ENCODE measurements at regions of chr16 and their contacts with region 1.

Region 1: DNA sequence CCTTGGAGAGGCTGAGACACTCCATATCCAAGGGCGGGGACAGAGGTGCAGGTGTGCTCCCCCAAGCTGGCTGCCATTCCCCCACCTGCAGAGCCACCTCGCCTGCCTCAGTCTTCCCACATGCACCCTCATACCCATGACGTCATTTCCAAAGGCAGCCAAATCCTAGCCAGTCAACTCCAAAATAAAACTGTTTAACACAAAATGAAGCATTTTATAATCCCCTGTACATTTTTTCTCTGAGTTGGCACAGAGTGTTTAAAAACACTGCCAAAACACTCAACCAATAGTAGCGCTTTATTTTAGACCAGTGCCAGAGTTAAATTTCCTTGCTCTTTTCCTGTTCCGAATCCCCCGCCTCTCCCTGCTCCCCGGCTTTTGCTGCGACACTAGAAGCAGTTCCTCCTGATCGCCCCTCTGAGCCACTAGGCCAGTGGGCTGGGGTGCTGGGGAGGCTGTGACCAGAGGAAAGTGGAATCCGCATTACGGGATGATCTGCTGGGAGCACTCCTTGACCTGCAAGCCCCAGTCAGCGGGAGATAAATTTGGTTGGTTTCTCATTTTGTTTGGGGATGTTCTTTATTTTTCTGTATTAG is 139.5 kb downstream of the ZNF423 start:
- DNase-seq: no peak
- ATAC-seq: no peak
- H3K4me3 ChIP-seq: no peak overlapping the region
- H3K27ac ChIP-seq: no peak overlapping the region
- H3K4me1 ChIP-seq: no peaks in the 10 kb centered on the region
- H3K27me3 ChIP-seq: no peaks in the 10 kb centered on the region
- CTCF ChIP-seq: no peak

Region 2: DNA sequence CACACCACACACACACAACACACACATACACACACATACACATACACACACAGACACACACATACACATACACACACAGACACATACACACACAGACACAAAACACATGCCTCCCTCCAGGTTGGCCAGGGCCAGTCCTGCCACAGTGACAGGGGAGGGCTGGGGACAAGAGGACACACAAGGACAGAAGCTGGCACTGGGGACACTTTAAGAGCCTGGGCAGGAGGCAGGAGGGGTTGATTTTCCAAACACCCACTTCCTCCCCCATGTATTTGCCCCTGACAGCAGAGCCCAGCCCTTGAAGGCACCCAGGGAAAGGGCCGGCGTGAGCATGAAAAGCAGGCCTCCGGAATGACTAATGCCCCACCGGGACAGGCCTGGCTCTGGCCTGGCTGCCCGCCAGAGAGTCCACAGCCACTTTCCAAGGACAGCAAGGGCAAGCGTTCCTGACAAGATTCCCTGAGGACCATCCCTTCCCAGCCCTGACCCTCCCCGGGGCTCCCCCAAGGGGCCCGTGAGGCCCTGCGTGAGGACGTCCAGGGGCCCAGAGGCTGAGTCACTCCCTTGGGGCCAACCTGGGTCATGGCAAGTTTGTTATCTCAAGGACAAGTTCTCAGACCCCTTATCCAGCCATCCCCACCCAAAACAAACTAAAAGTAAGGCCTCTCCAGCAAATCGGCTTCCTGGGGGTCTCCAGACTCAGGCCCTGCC is 96.1 kb before region 1 on chr16:
- intact Hi-C with region 1: no loop called
- DNase-seq: peak; percentile 88 to 93
- ATAC-seq: peak; percentile 83 to 95 (median 85)
- H3K4me3 ChIP-seq: no peak overlapping the region
- H3K27ac ChIP-seq: peak overlapping the region; percentile 69
- H3K4me1 ChIP-seq: peaks cover 15% of the 10 kb centered on the region
- H3K27me3 ChIP-seq: no peaks in the 10 kb centered on the region
- CTCF ChIP-seq: no peak

Region 3: GRCh38 chr16:49776085-49776595 is 59.7 kb after region 1 on chr16:
- intact Hi-C with region 1: loop called in 1 of 2 experiments (anchors 10 kb)
- DNase-seq: peak; percentile 36 to 72
- ATAC-seq: peak; percentile 7 to 56 (median 24)
- H3K4me3 ChIP-seq: peak overlapping the region; percentile 28
- H3K27ac ChIP-seq: peak overlapping the region; percentile 15
- H3K4me1 ChIP-seq: peaks cover 50% of the 10 kb centered on the region
- H3K27me3 ChIP-seq: no peaks in the 10 kb centered on the region
- CTCF ChIP-seq: no peak

Region 4: DNA sequence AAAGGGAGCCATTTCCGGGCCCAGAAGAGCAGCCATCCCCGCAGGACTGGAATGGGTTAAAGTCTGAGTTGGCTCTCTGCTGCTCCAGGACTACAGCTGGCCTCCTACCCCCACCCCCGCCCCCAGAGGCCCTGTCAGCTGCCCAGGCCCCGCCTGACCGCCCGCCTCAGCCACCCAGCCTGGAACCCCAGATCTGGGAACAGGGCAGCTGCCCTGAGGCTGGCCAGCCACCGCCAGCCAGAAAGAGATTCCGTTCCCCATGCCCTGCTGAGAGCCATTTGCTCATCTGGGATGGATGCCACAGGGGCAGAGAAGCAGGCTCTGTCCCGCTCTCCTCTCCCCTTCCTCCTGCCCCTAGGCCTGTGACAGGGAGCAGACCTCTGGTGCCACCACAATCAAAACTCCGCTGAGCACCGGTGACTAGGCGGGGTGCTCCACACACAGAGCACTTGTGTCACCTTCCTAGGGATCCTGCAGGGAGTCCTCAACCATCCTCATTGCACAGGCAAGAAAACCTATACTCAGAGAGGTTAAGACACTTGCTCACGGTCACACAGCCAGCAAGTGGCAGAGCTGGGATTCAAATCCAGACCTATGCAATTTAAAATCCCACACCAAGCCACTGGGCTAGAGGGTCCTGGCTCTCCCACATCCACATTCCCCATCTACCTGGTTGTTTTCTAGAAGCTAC is 95.4 kb after region 1 on chr16:
- intact Hi-C with region 1: no loop called
- DNase-seq: peak; percentile 68 to 88
- ATAC-seq: peak; percentile 87 to 92 (median 90)
- H3K4me3 ChIP-seq: peak overlapping the region; percentile 41
- H3K27ac ChIP-seq: peak overlapping the region; percentile 74
- H3K4me1 ChIP-seq: peaks cover 67% of the 10 kb centered on the region
- H3K27me3 ChIP-seq: no peaks in the 10 kb centered on the region
- CTCF ChIP-seq: no peak

Measured in psoas muscle (tissue), 8 donors.